ENCODE measurements at regions of chr12 and their contacts with region 1.

Region 1: DNA sequence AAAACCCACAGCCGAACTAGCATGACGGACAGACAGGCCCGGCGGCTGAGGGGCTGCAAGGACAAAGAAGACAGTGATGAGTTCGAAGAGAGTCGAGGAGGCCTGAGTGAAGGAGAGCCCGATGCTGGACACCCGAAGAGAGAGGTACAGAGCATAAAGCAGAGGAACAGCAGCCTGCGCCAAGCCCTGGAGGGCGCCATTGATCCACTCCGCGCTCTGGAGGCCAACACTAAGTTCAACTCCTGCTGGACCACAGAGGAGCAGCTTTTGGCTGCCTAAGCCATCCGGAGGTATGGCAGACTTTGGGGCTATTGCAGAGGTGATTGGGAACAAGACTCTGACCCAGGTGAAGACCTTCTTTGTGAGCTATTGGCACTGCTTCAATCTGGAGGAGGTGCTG is 7.8 kb upstream of the PLXNC1 start:
- DNase-seq: no peak
- H3K4me3 ChIP-seq: no peak overlapping the region
- H3K27ac ChIP-seq: no peak overlapping the region
- H3K4me1 ChIP-seq: peaks cover 0 to 6% (median 0%) of the 10 kb centered on the region in 3 donors
- H3K27me3 ChIP-seq: no peaks in the 10 kb centered on the region
- CTCF ChIP-seq: no peak

Region 2: GRCh38 chr12:94525951-94526350 is 385.4 kb after region 1 on chr12:
- intact Hi-C with region 1: loop called (anchors 5 kb)
- DNase-seq: no peak
- H3K4me3 ChIP-seq: no peak overlapping the region
- H3K27ac ChIP-seq: no peak overlapping the region
- H3K4me1 ChIP-seq: no peaks in the 10 kb centered on the region
- H3K27me3 ChIP-seq: no peaks in the 10 kb centered on the region
- CTCF ChIP-seq: no peak